ENCODE measurements at regions of chrX and their contacts with region 1.

Region 1: DNA sequence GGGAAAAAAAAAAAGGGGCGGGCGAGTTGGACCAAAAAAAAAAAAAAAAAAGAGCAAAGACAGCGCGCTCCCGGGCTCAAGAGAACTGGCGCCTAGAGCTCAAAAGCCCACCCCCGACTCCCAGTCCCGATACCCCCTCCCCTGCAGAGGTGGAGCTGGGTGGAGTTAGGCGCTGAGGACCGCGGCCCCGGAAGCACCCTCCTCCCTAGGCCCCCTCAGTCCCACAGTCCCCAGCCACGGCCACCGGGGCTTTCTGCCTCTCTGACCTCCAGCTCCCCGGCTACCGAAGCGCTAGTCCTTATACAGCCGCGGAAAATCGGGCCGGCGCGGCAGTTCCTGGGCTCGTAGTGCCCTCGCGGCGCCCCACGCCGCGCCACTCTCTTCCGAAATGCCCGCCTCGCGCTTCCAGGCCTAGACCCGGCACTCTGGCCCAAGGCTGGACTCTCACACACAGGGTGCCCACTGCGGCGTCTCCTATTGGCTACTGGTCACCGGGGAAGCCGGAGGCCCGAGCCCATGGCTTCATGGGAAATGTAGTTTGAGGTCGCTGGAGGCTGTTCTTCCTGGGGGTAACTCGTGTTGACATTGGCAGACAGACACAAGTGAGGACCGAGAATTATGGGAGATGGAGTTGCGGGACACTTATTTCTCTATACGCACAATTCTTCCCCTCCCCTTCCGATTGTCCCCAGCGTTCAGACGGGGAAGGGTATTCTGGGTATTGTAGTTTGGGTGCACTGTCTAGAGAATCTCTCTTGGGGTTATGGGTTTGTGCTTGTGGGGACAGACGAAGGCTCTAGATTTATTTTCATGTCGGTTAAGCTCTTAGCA is at the start of gene ENOX2:
- DNase-seq: peak; percentile 96
- ATAC-seq: peak; percentile 98
- H3K4me3 ChIP-seq: peak within 1 kb of the TSS; percentile 72
- H3K27ac ChIP-seq: peak within 1 kb of the TSS; percentile 74
- H3K4me1 ChIP-seq: peaks cover 5% of the 10 kb centered on the region; the same call in 1 of the 2 replicates
- H3K27me3 ChIP-seq: no peaks in the 10 kb centered on the region
- CTCF ChIP-seq: no peak
- total RNA-seq, gene ENOX2: 11.8 and 17.3 TPM in 2 replicates

Region 2: DNA sequence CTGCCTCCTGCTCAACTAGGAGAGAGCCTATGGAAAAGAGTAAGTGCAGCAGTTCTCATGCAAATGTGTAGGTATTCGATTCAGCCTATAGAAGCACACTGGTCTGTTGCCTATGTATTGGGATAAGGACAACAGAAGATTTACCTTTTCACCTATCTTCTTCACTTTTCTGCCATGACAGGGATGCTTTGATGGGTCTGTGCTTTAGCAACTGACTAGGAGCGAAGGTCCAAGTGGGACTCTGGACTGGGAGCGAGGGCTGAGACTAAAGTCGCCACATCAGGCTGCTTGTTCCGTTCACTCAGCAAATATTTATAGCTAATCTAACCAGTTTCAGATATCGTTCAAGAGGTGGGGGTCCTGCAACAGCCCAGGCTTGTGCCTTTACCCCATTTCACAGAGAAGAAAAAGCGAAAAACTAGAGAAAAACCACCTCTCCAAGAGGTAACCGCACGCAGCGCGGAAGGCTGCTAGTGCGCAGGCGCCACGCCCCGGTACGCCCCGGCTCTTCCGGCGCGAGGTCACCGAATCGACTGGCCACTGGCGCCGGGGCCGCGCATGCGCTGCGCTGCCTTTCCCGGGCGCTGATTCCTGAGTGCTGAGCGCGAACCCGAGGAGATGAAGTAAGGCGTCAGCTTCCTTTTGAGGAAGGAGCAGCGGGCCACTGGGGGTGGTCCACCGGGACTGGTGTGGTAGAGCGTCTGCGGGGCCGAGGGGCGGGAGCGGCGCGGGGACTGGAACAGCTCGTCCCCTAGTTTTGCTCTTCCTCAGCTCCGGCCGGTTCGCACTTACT is 501.4 kb before region 1 on chrX and contains the start of gene RBMX2:
- CTCF ChIA-PET with region 1: no interaction called
- POLR2A ChIA-PET with region 1: no interaction called
- intact Hi-C with region 1: loop called (anchors 2 kb)
- DNase-seq: peak; percentile 82
- ATAC-seq: peak; percentile 95
- H3K4me3 ChIP-seq: peak within 1 kb of the TSS; percentile 81
- H3K27ac ChIP-seq: peak within 1 kb of the TSS; percentile 21
- H3K4me1 ChIP-seq: 0 out of 2 replicates have a peak, but pooled peaks cover 7% of the 10 kb centered on the region
- H3K27me3 ChIP-seq: no peaks in the 10 kb centered on the region
- CTCF ChIP-seq: no peak
- total RNA-seq, gene RBMX2: 26.7 and 31.6 TPM in 2 replicates

Region 3: GRCh38 chrX:130575831-130576389 is 327.1 kb before region 1 on chrX:
- CTCF ChIA-PET with region 1: no interaction called
- POLR2A ChIA-PET with region 1: no interaction called
- intact Hi-C with region 1: loop called (anchors 5 kb)
- DNase-seq: peak; percentile 56
- ATAC-seq: peak; percentile 66
- H3K4me3 ChIP-seq: no peak overlapping the region
- H3K27ac ChIP-seq: no peak overlapping the region
- H3K4me1 ChIP-seq: peaks cover 12% of the 10 kb centered on the region
- H3K27me3 ChIP-seq: no peaks in the 10 kb centered on the region
- CTCF ChIP-seq: peak; percentile 82

Region 4: GRCh38 chrX:130772105-130772775 is 130.8 kb before region 1 on chrX:
- CTCF ChIA-PET with region 1: no interaction called
- POLR2A ChIA-PET with region 1: no interaction called
- intact Hi-C with region 1: loop called (anchors 2 kb)
- DNase-seq: peak; percentile 82
- ATAC-seq: peak; percentile 71
- H3K4me3 ChIP-seq: peak overlapping the region; percentile 23; the same call in 1 of the 2 replicates
- H3K27ac ChIP-seq: peak overlapping the region; percentile 98
- H3K4me1 ChIP-seq: peaks cover 40% of the 10 kb centered on the region
- H3K27me3 ChIP-seq: no peaks in the 10 kb centered on the region
- CTCF ChIP-seq: no peak

Region 5: GRCh38 chrX:130916636-130917422 is 13.8 kb after region 1 on chrX:
- CTCF ChIA-PET with region 1: interaction called, 28 read pairs
- POLR2A ChIA-PET with region 1: no interaction called
- intact Hi-C with region 1: no loop called
- DNase-seq: peak; percentile 42
- ATAC-seq: peak; percentile 64
- H3K4me3 ChIP-seq: no peak overlapping the region
- H3K27ac ChIP-seq: no peak overlapping the region
- H3K4me1 ChIP-seq: no peaks in the 10 kb centered on the region
- H3K27me3 ChIP-seq: no peaks in the 10 kb centered on the region
- CTCF ChIP-seq: peak; percentile 85